A549 (cell line): ENCODE measurements at regions of chr7 and their contacts with region 1.

Region 1: DNA sequence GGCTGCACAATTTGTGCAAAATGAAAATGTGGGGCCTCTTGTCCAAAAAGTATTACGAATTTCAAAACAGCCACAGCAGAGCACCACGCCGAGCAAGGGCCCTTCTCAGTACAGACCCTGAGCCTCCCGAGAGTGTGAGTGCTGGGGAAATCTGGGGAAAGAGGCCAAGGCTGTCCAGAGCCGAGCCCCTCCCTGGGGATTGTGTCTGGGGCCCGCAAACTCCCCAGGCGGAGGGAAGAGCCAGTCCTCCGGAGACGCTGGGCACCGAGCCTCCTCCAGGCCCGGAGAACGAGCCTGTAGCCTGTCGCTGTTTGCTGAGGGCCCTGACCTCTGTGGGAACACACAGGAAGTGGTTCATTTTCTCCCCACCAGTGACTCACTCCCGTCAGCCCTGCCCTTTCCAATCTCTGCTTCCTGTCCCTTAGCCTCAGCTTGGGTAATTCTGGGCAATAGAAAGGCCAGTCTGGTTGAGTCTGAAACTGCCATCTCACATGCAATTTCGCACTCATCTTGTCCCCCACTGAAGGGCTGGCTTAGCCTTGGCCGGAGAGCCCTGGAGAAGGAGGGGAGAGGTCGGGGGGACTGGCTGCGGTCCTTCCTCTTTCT is 19.5 kb upstream of the GNA12 start:
- DNase-seq: peak; percentile 80 to 83
- ATAC-seq: peak; percentile 93 to 94
- H3K4me3 ChIP-seq: no peak overlapping the region
- H3K27ac ChIP-seq: peak overlapping the region; percentile 74 to 88
- H3K4me1 ChIP-seq: peaks cover 13% of the 10 kb centered on the region
- CTCF ChIP-seq: no peak
- EP300 ChIP-seq: no peak
- POLR2A ChIP-seq: no peak
- RAD21 ChIP-seq: 0 out of 5 replicates have a peak, but pooled peaks of 1 of the 2 experiments have one; percentile 2

Region 2: DNA sequence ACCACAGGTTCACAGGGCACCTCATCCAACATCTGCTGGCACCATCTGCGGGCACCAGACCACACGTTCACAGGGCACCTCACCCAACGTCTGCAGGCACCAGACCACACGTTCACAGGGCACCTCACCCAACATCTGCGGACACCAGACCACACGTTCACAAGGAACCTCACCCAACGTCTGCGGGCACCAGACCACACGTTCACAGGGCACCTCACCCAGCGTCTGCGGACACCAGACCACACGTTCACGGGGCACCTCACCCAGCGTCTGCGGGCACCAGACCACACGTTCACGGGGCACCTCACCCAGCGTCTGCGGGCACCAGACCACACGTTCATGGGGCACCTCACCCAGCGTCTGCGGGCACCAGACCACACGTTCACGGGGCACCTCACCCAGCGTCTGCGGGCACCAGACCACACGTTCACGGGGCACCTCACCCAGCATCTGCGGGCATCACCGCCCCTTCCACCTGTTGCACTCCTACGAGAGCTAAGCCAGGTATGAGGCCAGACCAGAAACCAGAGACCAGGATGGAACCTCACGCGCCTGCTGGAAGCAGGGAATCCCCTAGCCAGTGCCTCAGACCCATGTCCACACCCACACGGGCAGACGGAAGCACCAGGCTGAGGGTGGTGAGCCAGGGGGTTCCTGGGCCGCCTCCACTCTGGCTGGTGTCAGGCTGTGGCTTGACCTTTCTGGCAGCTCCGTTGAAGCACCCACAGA is 813.6 kb before region 1 on chr7:
- CTCF ChIA-PET with region 1: no interaction called
- POLR2A ChIA-PET with region 1: no interaction called
- DNase-seq: no peak
- ATAC-seq: no peak
- H3K4me3 ChIP-seq: no peak overlapping the region
- H3K27ac ChIP-seq: no peak overlapping the region
- H3K4me1 ChIP-seq: no peaks in the 10 kb centered on the region
- CTCF ChIP-seq: no peak
- EP300 ChIP-seq: no peak
- POLR2A ChIP-seq: no peak
- RAD21 ChIP-seq: no peak

Region 3: GRCh38 chr7:2785071-2785500 is 78.5 kb before region 1 on chr7:
- CTCF ChIA-PET with region 1: interaction called, 13 read pairs
- POLR2A ChIA-PET with region 1: no interaction called
- DNase-seq: no peak
- ATAC-seq: no peak
- H3K4me3 ChIP-seq: no peak overlapping the region
- H3K27ac ChIP-seq: peak overlapping the region in 1 of 2 experiments; percentile 19; a peak in 1 of 6 replicates
- H3K4me1 ChIP-seq: 0 out of 3 replicates have a peak, but pooled peaks cover 4% of the 10 kb centered on the region
- CTCF ChIP-seq: no peak
- EP300 ChIP-seq: no peak
- POLR2A ChIP-seq: no peak
- RAD21 ChIP-seq: no peak

Region 4: GRCh38 chr7:2831015-2831414 is 32.5 kb before region 1 on chr7:
- CTCF ChIA-PET with region 1: interaction called, 13 read pairs
- POLR2A ChIA-PET with region 1: no interaction called
- DNase-seq: no peak
- ATAC-seq: no peak
- H3K4me3 ChIP-seq: no peak overlapping the region
- H3K27ac ChIP-seq: no peak overlapping the region
- H3K4me1 ChIP-seq: no peaks in the 10 kb centered on the region
- CTCF ChIP-seq: no peak
- EP300 ChIP-seq: no peak
- POLR2A ChIP-seq: no peak
- RAD21 ChIP-seq: no peak

Region 5: GRCh38 chr7:2851497-2851896 is 12.1 kb before region 1 on chr7:
- CTCF ChIA-PET with region 1: interaction called, 47 read pairs
- POLR2A ChIA-PET with region 1: no interaction called
- DNase-seq: no peak
- ATAC-seq: no peak
- H3K4me3 ChIP-seq: no peak overlapping the region
- H3K27ac ChIP-seq: no peak overlapping the region
- H3K4me1 ChIP-seq: no peaks in the 10 kb centered on the region
- CTCF ChIP-seq: no peak
- EP300 ChIP-seq: no peak
- POLR2A ChIP-seq: no peak
- RAD21 ChIP-seq: no peak

Region 6: DNA sequence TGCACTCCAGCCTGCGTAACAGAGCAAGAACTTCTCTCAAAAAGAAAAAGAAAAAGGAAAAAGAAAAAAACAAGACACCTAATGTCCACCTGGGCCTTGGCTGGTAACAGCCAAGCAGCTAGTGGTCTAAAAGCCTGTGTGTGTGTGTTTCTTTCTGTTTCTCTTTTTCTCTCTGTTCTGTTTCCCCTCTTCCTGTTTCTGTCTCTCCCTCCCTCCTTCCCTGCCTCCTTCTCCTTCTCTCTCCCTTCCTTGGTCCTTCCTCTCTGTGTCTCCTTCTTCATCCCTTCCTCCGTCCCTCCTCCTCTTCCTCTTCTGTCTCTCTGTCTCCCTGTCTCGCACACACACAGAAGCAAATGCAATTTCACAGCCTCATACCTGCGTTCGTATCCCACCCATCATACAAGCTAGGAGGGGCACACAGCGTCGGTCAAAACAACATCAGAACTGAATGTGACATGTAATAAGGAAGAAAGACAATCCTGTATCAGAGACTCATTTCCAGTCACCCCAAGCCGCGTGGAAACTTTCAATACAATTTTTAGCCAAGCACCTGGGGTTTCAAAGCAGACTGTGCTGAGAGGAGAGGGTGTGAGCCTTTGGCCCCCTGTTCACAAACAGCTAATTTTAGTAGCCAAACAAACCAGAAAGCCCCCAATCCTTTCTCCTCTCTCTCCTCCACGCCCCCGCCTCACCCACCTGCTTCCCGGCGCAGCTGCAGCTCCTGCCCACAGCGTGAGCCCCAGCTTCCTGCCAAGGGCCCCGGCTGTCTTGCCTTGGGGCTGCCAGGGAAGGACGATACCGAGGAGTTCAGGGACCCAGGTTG is 30.8 kb after region 1 on chr7:
- CTCF ChIA-PET with region 1: interaction called, 15 read pairs
- POLR2A ChIA-PET with region 1: no interaction called
- DNase-seq: no peak
- ATAC-seq: peak in 1 of 2 experiments; percentile 35; a peak in 3 of 6 replicates
- H3K4me3 ChIP-seq: no peak overlapping the region
- H3K27ac ChIP-seq: no peak overlapping the region
- H3K4me1 ChIP-seq: no peaks in the 10 kb centered on the region; the same call in 2 of the 3 replicates
- CTCF ChIP-seq: no peak
- EP300 ChIP-seq: no peak
- POLR2A ChIP-seq: no peak
- RAD21 ChIP-seq: no peak

Region 7: GRCh38 chr7:3005257-3005656 is 141.7 kb after region 1 on chr7:
- CTCF ChIA-PET with region 1: no interaction called
- POLR2A ChIA-PET with region 1: no interaction called
- DNase-seq: no peak
- ATAC-seq: no peak
- H3K4me3 ChIP-seq: no peak overlapping the region
- H3K27ac ChIP-seq: no peak overlapping the region
- H3K4me1 ChIP-seq: no peaks in the 10 kb centered on the region
- CTCF ChIP-seq: no peak
- EP300 ChIP-seq: no peak
- POLR2A ChIP-seq: no peak
- RAD21 ChIP-seq: no peak

Region 8: GRCh38 chr7:3300651-3301378 is 437.3 kb after region 1 on chr7 and contains the start of gene SDK1:
- CTCF ChIA-PET with region 1: interaction called, 20 read pairs
- POLR2A ChIA-PET with region 1: no interaction called
- DNase-seq: peak; percentile 59 to 91
- ATAC-seq: peak; percentile 88 to 92
- H3K4me3 ChIP-seq: peak within 1 kb of the TSS; percentile 84
- H3K27ac ChIP-seq: peak within 1 kb of the TSS; percentile 74 to 87
- H3K4me1 ChIP-seq: peaks cover 8% of the 10 kb centered on the region; the same call in 1 of the 3 replicates
- CTCF ChIP-seq: peak; percentile 95
- EP300 ChIP-seq: no peak
- POLR2A ChIP-seq: no peak
- RAD21 ChIP-seq: peak; percentile 48 to 90; a peak in 4 of 5 replicates
- polyA plus RNA-seq, gene SDK1: 0.12 and 0.20 TPM in 2 replicates